Heart left ventricle (tissue), 16 donors: ENCODE measurements at regions of chr15 and their contacts with region 1.

Region 1: DNA sequence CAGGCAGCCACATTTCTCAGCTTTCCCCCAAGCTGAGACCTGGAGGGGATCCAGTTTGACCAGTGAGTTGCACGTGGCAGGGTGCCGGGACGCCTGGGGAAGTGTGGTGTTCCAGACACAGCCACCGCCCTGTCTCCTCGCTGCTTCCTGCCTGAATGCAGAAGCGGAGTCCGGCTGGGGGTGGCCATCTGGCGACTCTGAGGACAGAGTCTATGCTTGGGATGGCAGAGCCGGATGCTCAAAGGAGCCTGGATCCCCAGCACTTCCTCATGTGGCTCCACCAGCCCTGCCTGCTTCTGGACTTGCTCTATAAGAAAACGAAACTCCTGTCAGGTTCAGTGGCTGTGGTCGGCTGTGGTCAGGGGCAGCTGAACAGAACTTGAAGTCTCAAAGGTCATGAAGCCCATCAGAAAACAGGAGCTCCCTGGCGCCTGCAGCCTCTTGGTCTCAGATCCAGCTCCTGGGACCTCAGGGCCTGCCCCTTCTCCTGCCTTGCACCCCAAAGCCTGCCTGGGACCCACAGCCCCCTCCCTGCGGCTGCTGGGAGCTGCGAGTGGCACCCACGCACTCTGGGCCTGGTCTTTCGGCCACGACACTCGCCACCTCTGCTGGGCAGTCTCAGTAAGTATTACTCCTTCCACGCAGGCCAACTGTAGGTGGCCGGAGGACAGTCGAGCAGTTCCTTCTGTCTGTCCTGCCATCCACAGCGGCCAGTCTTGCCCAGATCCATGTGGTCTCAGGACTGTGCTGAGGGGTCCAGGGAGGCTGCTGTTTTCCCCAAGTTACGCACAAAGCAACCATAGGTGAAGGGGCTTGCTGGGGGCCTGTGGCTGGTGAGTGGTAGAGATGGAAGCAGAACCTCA is 112.8 kb upstream of the MEF2A start:
- DNase-seq: peak; percentile 91 to 96 (median 95)
- ATAC-seq: peak; percentile 23 to 66 (median 52)
- H3K4me3 ChIP-seq: peak overlapping the region in 7 of 12 donors; percentile 6 to 30 (median 16)
- H3K27ac ChIP-seq: peak overlapping the region; percentile 86 to 99 (median 94)
- H3K4me1 ChIP-seq: peaks cover 14 to 88% (median 69%) of the 10 kb centered on the region in 12 donors
- H3K27me3 ChIP-seq: no peaks in the 10 kb centered on the region
- CTCF ChIP-seq: no peak
- POLR2A ChIP-seq: no peak

Region 2: GRCh38 chr15:99197856-99198255 is 255.1 kb before region 1 on chr15:
- intact Hi-C with region 1: no loop called
- DNase-seq: no peak
- ATAC-seq: no peak
- H3K4me3 ChIP-seq: no peak overlapping the region
- H3K27ac ChIP-seq: no peak overlapping the region
- H3K4me1 ChIP-seq: no peaks in the 10 kb centered on the region
- H3K27me3 ChIP-seq: no peaks in the 10 kb centered on the region
- CTCF ChIP-seq: no peak
- POLR2A ChIP-seq: no peak

Region 3: DNA sequence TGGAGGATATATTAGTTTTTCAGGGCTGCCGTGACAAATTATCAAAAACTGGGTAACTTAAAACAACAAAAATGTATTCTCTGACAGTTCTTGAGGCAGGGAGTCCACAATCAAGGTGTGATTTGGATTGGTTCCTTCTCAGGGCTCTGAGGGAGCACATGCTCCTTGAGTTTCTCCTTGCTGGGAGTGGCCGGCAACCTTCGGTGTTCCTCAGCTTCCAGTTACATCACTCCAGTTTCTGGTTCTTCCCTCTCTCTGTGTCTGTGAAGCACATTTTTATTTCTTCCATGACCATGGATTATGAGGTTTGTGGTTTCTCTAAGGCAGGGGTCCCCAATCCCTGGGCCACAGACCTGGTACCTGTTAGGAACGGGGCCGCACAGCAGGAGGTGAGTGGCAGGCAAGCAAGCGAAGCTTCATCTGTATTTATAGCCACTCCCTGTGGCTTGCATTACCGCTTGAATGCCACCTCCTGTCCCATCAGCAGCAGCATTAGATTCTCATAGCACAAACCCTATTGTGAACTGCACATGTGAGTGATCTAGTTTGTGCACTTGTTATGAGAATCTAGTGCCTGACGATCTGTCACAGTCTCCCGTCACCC is 177.4 kb before region 1 on chr15:
- intact Hi-C with region 1: no loop called
- DNase-seq: no peak
- ATAC-seq: no peak
- H3K4me3 ChIP-seq: no peak overlapping the region
- H3K27ac ChIP-seq: no peak overlapping the region
- H3K4me1 ChIP-seq: peaks cover 0 to 14% (median 0%) of the 10 kb centered on the region in 12 donors
- H3K27me3 ChIP-seq: no peaks in the 10 kb centered on the region
- CTCF ChIP-seq: no peak
- POLR2A ChIP-seq: no peak

Region 4: DNA sequence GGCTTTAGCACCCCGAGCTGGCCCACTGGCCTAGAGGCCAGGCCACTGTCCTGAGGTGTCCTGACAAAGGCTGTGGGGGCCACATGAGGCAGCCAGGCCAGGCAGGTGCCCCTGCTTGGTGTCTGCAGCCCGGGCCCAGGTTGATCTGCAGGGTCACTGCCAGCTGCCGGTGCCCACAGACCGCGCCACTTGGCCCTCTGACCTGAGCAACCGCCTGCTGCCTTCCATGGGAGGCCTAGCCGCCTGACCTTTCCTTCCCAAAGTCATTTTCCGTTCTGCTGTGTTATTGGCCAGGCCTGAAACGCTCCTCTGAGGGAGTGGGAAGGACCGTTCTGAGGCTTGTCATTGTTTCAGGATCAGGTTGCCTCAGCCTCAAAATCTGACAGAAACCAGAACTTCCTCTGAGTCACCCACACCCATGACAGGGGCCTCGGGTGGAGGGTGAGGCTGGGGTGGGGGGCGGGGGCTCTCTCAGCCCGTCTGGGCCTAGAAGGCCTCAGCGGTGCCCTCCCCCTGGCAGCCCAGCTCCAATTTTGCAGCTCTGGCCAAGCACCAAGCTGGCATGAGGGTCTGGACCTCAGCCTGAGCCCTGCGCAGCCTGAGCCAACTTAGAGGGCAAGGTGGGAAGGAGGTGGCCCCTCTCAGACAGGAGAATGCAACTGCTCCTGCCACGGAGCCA is 27.9 kb before region 1 on chr15:
- intact Hi-C with region 1: loop called in 1 of 10 experiments (anchors 2 kb)
- DNase-seq: peak in 4 of 5 donors; percentile 55 to 78 (median 76)
- ATAC-seq: peak; percentile 75 to 94 (median 90)
- H3K4me3 ChIP-seq: peak overlapping the region in 1 of 12 donors; percentile 9
- H3K27ac ChIP-seq: peak overlapping the region; percentile 80 to 96 (median 90)
- H3K4me1 ChIP-seq: peaks cover 8 to 38% (median 25%) of the 10 kb centered on the region in 12 donors
- H3K27me3 ChIP-seq: no peaks in the 10 kb centered on the region
- CTCF ChIP-seq: no peak
- POLR2A ChIP-seq: peak in 1 of 2 donors; percentile 21

Region 5: GRCh38 chr15:99473981-99474906 is 21.2 kb after region 1 on chr15:
- intact Hi-C with region 1: loop called in 1 of 10 experiments (anchors 1 kb)
- DNase-seq: peak; percentile 74 to 87 (median 76)
- ATAC-seq: peak; percentile 68 to 90 (median 84)
- H3K4me3 ChIP-seq: peak overlapping the region in 5 of 12 donors; percentile 3 to 37 (median 32)
- H3K27ac ChIP-seq: peak overlapping the region; percentile 59 to 88 (median 78)
- H3K4me1 ChIP-seq: peaks cover 0 to 66% (median 54%) of the 10 kb centered on the region in 12 donors
- H3K27me3 ChIP-seq: no peaks in the 10 kb centered on the region
- CTCF ChIP-seq: no peak
- POLR2A ChIP-seq: peak in 1 of 2 donors; percentile 17

Region 6: DNA sequence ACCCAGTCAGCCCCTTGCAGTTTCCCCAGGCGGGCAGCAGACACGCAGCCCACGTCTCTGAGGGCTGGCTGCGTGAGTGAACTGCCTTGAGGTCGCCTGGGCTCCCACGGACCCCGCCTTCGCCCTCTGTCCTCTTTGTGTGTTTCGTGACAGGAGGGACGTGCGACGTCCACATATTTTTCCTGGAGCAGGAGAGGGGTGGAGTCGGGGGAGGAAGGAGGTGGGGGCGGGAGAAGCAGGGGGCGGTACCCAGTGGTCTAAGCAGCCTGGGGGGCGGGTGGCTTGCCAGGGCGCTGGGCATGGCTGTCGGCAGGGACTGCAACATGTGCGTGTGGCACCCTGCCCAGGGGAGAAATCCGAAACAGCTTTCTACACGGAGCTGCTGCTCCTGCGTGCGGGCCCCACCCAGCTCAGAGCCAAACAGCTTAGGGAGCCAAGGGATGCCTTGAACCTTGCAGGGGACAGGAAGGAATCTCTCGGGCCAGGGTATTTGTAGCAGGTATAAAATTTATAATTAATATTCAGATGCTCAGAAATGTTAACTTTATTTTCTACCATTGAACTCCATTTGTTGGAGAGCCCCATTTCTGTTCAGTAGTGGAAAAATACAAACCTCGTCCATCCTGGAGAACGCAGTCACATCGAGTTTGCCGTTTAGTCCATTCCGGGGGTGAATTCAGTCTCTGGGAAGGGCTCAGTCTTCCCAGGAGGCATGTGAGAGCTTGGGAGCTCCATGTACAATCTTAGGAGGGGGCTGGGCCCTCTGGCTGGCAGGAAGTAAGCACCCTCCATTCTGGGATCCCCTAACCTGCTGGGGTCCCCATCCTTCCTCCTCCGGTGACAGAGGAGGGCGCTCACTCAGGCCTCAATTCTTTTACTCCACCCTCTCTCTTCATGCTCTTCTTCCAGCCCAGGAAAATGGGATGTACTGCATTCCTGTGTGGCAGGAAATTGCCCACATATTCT is 33.6 kb after region 1 on chr15:
- intact Hi-C with region 1: loop called in 2 of 10 experiments (anchors 1 to 2 kb)
- DNase-seq: peak; percentile 84 to 94 (median 93)
- ATAC-seq: peak; percentile 84 to 94 (median 93)
- H3K4me3 ChIP-seq: peak overlapping the region in 10 of 12 donors; percentile 13 to 56 (median 46)
- H3K27ac ChIP-seq: peak overlapping the region; percentile 20 to 91 (median 82)
- H3K4me1 ChIP-seq: peaks cover 0 to 35% (median 27%) of the 10 kb centered on the region in 12 donors
- H3K27me3 ChIP-seq: no peaks in the 10 kb centered on the region
- CTCF ChIP-seq: no peak
- POLR2A ChIP-seq: peak in 1 of 2 donors; percentile 34

Region 7: DNA sequence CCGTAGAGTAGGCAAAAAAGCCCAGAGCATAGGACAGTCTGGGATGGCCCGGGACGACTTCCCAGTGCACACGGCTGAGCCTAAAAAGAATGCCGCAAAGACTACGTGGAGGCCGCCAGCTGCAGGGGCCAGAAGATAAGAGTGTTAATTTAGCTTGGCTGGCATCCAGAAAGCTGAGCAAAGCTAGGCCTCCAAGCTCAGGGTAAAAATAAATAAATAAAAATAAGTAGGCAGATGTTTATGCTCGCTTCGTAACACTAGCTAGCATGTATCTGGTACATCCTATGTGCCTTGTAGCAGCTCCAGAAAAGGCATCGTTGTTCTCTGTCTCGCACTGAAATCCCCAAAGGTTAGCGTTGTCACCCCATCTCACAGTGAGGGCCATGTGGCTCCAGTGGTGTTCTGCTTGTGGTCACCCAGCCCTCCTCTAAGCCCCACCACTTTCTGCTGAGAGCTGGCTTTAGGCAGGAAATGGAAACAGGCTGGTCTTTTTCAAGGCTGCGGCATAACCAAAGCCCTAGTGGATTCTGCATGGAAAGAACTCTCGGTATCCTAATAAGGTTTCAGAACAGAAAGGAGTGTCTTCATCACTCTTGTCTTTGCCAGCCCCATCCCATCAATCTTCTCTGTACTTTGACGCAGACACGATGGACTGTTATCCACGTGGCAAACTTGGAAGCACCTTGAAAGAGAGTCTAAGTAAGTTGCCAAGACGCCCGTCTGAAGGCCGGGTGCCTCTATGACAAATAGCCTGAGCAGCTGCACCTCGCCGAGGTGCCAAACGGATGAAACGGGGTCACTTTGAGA is 54.7 kb after region 1 on chr15:
- intact Hi-C with region 1: loop called in 7 of 10 experiments (anchors 2 to 5 kb)
- DNase-seq: peak; percentile 78 to 87 (median 81)
- ATAC-seq: peak; percentile 86 to 91 (median 88)
- H3K4me3 ChIP-seq: peak overlapping the region in 5 of 12 donors; percentile 2 to 20 (median 13)
- H3K27ac ChIP-seq: peak overlapping the region; percentile 19 to 91 (median 80)
- H3K4me1 ChIP-seq: peaks cover 3 to 94% (median 45%) of the 10 kb centered on the region in 12 donors
- H3K27me3 ChIP-seq: no peaks in the 10 kb centered on the region
- CTCF ChIP-seq: no peak
- POLR2A ChIP-seq: no peak

Region 8: DNA sequence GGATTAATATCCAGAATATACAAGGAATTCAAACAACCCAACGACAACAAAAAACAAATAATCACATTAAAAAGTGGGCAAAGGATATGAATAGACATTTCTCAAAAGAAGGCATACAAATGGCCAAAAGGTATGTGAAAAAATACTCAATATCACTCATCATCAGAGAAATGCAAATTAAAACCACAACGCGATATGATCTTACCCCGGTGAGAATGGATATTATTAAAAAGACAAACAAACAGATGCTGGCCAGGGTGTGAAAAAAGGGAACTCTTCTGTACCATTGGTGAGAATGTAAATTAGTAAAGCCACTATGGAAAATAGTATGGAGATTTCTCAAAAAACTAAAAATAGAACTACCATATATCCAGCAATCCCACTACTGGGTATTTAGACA is 69.3 kb after region 1 on chr15:
- intact Hi-C with region 1: no loop called
- DNase-seq: no peak
- ATAC-seq: no peak
- H3K4me3 ChIP-seq: no peak overlapping the region
- H3K27ac ChIP-seq: no peak overlapping the region
- H3K4me1 ChIP-seq: no peaks in the 10 kb centered on the region
- H3K27me3 ChIP-seq: no peaks in the 10 kb centered on the region
- CTCF ChIP-seq: no peak
- POLR2A ChIP-seq: no peak

Region 9: GRCh38 chr15:99682455-99682854 is 229.4 kb after region 1 on chr15:
- intact Hi-C with region 1: loop called in 2 of 10 experiments (anchors 5 to 10 kb)
- DNase-seq: no peak
- ATAC-seq: peak in 2 of 4 donors; percentile 62 to 64
- H3K4me3 ChIP-seq: no peak overlapping the region
- H3K27ac ChIP-seq: peak overlapping the region in 11 of 12 donors; percentile 6 to 80 (median 66)
- H3K4me1 ChIP-seq: peaks cover 3 to 32% (median 20%) of the 10 kb centered on the region in 12 donors
- H3K27me3 ChIP-seq: no peaks in the 10 kb centered on the region
- CTCF ChIP-seq: no peak
- POLR2A ChIP-seq: no peak

Region 10: GRCh38 chr15:99704444-99704838 is 251.4 kb after region 1 on chr15:
- intact Hi-C with region 1: loop called in 3 of 10 experiments (anchors 5 to 10 kb)
- DNase-seq: peak in 2 of 5 donors; percentile 39 to 57
- ATAC-seq: peak; percentile 71 to 79 (median 76)
- H3K4me3 ChIP-seq: peak overlapping the region in 1 of 12 donors; percentile 8
- H3K27ac ChIP-seq: peak overlapping the region; percentile 21 to 87 (median 80)
- H3K4me1 ChIP-seq: peaks cover 3 to 69% (median 45%) of the 10 kb centered on the region in 12 donors
- H3K27me3 ChIP-seq: no peaks in the 10 kb centered on the region
- CTCF ChIP-seq: peak; percentile 66 to 85 (median 80)
- POLR2A ChIP-seq: no peak